Heart right ventricle (tissue), 16 donors: ENCODE measurements at regions of chr5 and their contacts with region 1.

Region 1: GRCh38 chr5:43514816-43515677 is at the start of gene C5orf34:
- DNase-seq: peak; percentile 97
- ATAC-seq: peak; percentile 99 to 100 (median 100)
- H3K4me3 ChIP-seq: peak within 1 kb of the TSS; percentile 43 to 81 (median 65)
- H3K27ac ChIP-seq: peak within 1 kb of the TSS; percentile 52 to 91 (median 88)
- H3K4me1 ChIP-seq: peaks cover 0 to 21% (median 16%) of the 10 kb centered on the region in 9 donors
- H3K27me3 ChIP-seq: no peaks in the 10 kb centered on the region
- CTCF ChIP-seq: peak in 2 of 9 donors; percentile 4 to 21
- total RNA-seq, gene C5orf34: 0.22 to 1.6 (median 0.53) TPM

Region 2: GRCh38 chr5:42923710-42924109 is 591.3 kb before region 1 on chr5:
- intact Hi-C with region 1: no loop called
- DNase-seq: no peak
- ATAC-seq: no peak
- H3K4me3 ChIP-seq: no peak overlapping the region
- H3K27ac ChIP-seq: no peak overlapping the region
- H3K4me1 ChIP-seq: no peaks in the 10 kb centered on the region
- H3K27me3 ChIP-seq: peaks cover 0 to 37% (median 16%) of the 10 kb centered on the region in 7 donors
- CTCF ChIP-seq: no peak

Region 3: GRCh38 chr5:43313035-43313853 is 201.8 kb before region 1 on chr5 and contains the start of gene HMGCS1:
- intact Hi-C with region 1: loop called in 1 of 10 experiments (anchors 10 kb)
- DNase-seq: peak; percentile 97 to 99
- ATAC-seq: peak; percentile 97 to 100 (median 99)
- H3K4me3 ChIP-seq: peak within 1 kb of the TSS; percentile 69 to 99 (median 92)
- H3K27ac ChIP-seq: peak within 1 kb of the TSS; percentile 75 to 97 (median 90)
- H3K4me1 ChIP-seq: peaks cover 0 to 47% (median 27%) of the 10 kb centered on the region in 9 donors
- H3K27me3 ChIP-seq: no peaks in the 10 kb centered on the region
- CTCF ChIP-seq: no peak
- total RNA-seq, gene HMGCS1: 24.8 to 33.0 (median 27.1) TPM

Region 4: DNA sequence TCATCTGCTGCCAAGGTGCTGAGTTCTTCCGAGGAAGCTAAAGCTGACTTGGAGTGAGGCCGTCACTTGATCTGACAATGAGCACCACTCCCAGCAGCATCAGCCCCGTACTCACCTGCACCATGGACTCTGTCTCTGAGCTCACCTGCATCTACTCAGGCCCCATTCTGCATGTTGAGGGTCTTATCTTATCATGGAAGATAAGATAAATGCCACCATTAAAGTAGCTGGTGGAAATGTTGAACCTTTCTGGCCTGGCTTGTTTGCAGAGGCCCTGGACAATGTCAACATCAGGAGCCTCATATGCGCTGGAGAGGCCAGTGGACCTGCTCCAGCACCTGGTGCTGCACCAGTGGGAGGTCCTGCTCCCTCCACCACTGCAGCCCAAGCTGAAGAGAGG is 166.8 kb before region 1 on chr5:
- intact Hi-C with region 1: no loop called
- DNase-seq: no peak
- ATAC-seq: no peak
- H3K4me3 ChIP-seq: no peak overlapping the region
- H3K27ac ChIP-seq: no peak overlapping the region
- H3K4me1 ChIP-seq: no peaks in the 10 kb centered on the region
- H3K27me3 ChIP-seq: peaks cover 0 to 4% (median 0%) of the 10 kb centered on the region in 7 donors
- CTCF ChIP-seq: no peak

Region 5: GRCh38 chr5:43556857-43557542 is 42.0 kb after region 1 on chr5 and contains the start of gene PAIP1:
- intact Hi-C with region 1: loop called in 1 of 10 experiments (anchors 5 kb)
- DNase-seq: peak; percentile 85 to 87
- ATAC-seq: peak; percentile 81 to 94 (median 91)
- H3K4me3 ChIP-seq: peak within 1 kb of the TSS; percentile 70 to 94 (median 84)
- H3K27ac ChIP-seq: peak within 1 kb of the TSS; percentile 93 to 99 (median 98)
- H3K4me1 ChIP-seq: peaks cover 0 to 48% (median 40%) of the 10 kb centered on the region in 9 donors
- H3K27me3 ChIP-seq: no peaks in the 10 kb centered on the region
- CTCF ChIP-seq: peak; percentile 50 to 91 (median 70)
- total RNA-seq, gene PAIP1: 112 to 162 (median 138) TPM